Activated naive CD4-positive, alpha-beta T cell treated with anti-CD3 and anti-CD28 coated beads for 36 hours (primary cell): ENCODE measurements at regions of chr2 and their contacts with region 1.

Region 1: DNA sequence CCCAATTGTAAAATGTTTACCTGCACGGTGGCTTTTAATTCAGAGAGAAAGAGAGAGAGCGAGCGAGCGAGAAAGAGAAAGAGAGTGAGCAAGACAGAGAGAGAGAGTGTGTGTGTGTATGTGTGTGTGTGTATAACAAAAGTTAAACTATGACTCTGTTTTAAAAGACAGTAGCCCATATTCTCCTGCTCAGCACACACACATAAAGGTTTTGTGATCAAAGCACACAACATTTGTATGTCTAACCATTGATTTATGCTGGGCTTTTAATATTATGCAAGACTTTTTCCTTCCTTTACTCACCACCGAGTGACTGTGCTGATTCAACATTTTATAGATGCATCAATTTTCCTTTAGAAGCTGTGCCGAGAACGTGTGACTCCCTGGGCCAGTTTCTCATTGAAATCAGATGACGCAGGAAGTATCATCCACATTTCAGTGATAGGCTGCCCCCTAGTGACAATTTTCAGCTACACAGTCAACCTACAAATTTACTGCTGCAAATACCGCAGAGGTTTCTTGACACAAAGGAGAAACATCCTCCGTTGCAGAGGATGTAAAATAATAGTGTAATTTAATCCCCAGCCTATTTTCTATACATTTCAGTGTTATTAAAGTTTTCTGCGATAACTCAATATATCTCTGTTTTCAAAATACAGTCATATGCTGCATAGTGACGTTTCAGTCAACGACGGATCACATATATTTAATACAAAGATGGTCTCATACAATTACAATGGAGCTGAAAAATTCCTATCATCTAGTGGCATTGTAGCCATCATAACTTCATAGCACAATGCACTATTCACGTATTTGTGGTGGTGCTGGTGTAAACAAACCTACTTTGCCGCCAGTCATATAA is 165.9 kb upstream of the TANK start:
- DNase-seq: peak; percentile 89
- H3K4me3 Mint-ChIP-seq: no peak overlapping the region
- H3K27ac Mint-ChIP-seq: no peak overlapping the region
- H3K4me1 Mint-ChIP-seq: peaks cover 7% of the 10 kb centered on the region
- H3K27me3 Mint-ChIP-seq: no peaks in the 10 kb centered on the region

Region 2: DNA sequence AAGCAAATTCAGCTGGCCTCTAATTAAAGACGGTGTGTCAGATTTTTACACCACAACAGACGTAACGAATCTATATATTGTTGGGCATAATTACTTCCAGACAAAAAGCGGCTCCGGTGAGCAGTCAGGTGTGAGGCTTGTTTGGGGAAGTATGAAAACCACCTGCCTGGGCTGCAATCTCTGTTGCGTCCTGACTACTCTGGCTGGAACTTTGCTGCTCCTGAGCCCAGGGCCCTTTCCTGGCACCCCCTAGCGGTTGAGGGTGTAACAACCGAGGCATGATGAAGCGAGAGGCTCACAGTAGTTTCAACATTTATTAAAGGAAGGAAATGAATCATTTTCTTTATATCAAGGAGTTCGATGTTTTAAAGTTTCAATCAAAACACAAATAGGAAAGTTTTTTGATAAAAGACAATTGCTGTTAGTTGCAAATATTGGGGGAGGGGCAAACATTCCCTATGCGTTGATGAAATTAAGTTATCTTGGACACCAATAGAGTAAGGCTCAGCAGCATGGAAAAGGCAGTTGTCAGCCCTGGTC is 783.7 kb before region 1 on chr2:
- CTCF ChIA-PET with region 1: interaction called, 3 read pairs
- intact Hi-C with region 1: loop called (anchors 2 kb)
- DNase-seq: peak; percentile 90
- H3K4me3 Mint-ChIP-seq: no peak overlapping the region
- H3K27ac Mint-ChIP-seq: no peak overlapping the region
- H3K4me1 Mint-ChIP-seq: peaks cover 29% of the 10 kb centered on the region
- H3K27me3 Mint-ChIP-seq: peaks cover 7% of the 10 kb centered on the region

Region 3: GRCh38 chr2:160269803-160270570 is 724.4 kb before region 1 on chr2:
- CTCF ChIA-PET with region 1: interaction called, 3 read pairs
- intact Hi-C with region 1: loop called (anchors 5 kb)
- DNase-seq: peak; percentile 64
- H3K4me3 Mint-ChIP-seq: peak overlapping the region; percentile 65
- H3K27ac Mint-ChIP-seq: peak overlapping the region; percentile 53
- H3K4me1 Mint-ChIP-seq: peaks cover 39% of the 10 kb centered on the region
- H3K27me3 Mint-ChIP-seq: no peaks in the 10 kb centered on the region

Region 4: GRCh38 chr2:160353166-160353565 is 641.2 kb before region 1 on chr2:
- CTCF ChIA-PET with region 1: no interaction called
- intact Hi-C with region 1: loop called (anchors 1 kb)
- DNase-seq: peak; percentile 59
- H3K4me3 Mint-ChIP-seq: no peak overlapping the region
- H3K27ac Mint-ChIP-seq: no peak overlapping the region
- H3K4me1 Mint-ChIP-seq: peaks cover 66% of the 10 kb centered on the region
- H3K27me3 Mint-ChIP-seq: no peaks in the 10 kb centered on the region

Region 5: DNA sequence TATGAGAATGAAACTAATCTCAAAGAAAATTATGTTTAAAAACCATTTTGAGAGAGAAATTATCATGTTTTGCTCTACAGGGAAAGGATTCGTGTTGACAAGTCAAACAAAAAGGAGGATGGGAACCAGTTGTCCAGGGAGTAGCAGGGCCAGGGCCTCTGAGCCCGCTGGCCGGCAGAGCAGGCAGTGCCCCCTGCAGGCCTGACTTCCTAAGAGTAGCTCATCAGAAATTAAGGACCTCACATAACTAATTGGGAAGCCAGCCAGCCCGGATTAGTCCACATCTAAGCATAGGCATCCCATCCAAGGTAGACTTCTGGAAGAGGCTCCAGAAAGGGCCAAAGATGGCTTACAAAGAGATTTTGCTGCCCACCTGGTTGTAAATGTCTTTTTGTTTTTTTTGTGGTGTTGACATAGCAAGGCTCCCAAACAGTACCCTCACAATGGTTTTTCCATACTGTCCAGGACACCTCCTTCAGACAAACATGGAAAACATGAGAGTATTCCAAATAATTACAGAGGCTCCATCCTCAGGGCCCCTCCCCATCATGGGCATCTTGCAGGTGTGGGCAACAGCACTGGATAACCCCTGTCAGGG is 75.4 kb before region 1 on chr2:
- CTCF ChIA-PET with region 1: interaction called, 3 read pairs
- intact Hi-C with region 1: loop called (anchors 5 kb)
- DNase-seq: peak; percentile 58
- H3K4me3 Mint-ChIP-seq: no peak overlapping the region
- H3K27ac Mint-ChIP-seq: no peak overlapping the region
- H3K4me1 Mint-ChIP-seq: no peaks in the 10 kb centered on the region
- H3K27me3 Mint-ChIP-seq: no peaks in the 10 kb centered on the region

Region 6: GRCh38 chr2:161004379-161004778 is 10.0 kb after region 1 on chr2:
- CTCF ChIA-PET with region 1: interaction called, 10 read pairs
- intact Hi-C with region 1: no loop called
- DNase-seq: no peak
- H3K4me3 Mint-ChIP-seq: no peak overlapping the region
- H3K27ac Mint-ChIP-seq: no peak overlapping the region
- H3K4me1 Mint-ChIP-seq: no peaks in the 10 kb centered on the region
- H3K27me3 Mint-ChIP-seq: peaks cover 13% of the 10 kb centered on the region

Region 7: GRCh38 chr2:161273038-161273760 is 278.8 kb after region 1 on chr2:
- CTCF ChIA-PET with region 1: interaction called, 7 read pairs
- intact Hi-C with region 1: loop called (anchors 1 kb)
- DNase-seq: peak; percentile 37
- H3K4me3 Mint-ChIP-seq: no peak overlapping the region
- H3K27ac Mint-ChIP-seq: no peak overlapping the region
- H3K4me1 Mint-ChIP-seq: peaks cover 3% of the 10 kb centered on the region
- H3K27me3 Mint-ChIP-seq: peaks cover 2% of the 10 kb centered on the region

Region 8: GRCh38 chr2:161533218-161533617 is 538.8 kb after region 1 on chr2:
- CTCF ChIA-PET with region 1: no interaction called
- intact Hi-C with region 1: no loop called
- DNase-seq: no peak
- H3K4me3 Mint-ChIP-seq: no peak overlapping the region
- H3K27ac Mint-ChIP-seq: no peak overlapping the region
- H3K4me1 Mint-ChIP-seq: no peaks in the 10 kb centered on the region
- H3K27me3 Mint-ChIP-seq: peaks cover 19% of the 10 kb centered on the region